ENCODE measurements at regions of chr1 and their contacts with region 1.

Region 1: DNA sequence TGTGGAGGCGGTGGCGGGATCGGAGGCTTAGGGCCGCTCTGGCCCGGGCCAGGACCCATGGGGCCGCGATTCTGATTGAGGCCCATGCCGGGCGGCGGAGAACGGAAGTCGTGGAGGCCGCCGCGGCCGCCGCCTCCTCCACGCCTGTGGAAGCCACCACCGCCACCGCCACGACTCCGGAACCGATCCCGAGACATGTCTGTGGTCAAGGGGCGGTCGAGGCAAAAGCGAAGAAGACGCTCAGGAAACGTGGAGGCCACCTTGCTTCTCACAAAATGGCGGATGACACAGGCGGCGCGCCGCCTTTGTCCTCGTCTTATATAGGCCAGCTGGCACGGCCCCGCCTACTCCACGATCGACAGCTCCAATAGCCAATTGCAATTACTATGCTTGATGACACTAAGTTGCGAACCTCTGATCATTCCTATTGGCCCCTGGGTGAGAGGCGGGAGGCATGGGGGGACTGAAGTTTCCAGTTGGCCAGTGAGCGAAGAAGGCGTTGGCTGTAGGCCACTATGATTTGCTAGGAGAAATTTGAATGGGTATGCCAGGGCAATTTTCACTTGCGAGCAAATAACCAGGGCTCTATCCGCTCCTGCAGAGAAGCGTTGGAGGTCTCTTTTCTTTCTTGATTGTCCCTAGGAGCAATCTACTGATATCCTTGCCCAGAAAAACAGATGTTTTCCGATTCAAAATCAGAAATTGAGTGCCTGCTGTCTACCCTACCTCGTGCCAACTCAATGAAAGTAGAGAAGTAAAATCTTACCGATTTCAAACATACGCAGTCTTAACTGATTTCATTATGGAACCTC is at the start of gene SFPQ:
- DNase-seq: peak; percentile 95
- ATAC-seq: peak; percentile 95 to 96
- total RNA-seq, gene SFPQ: 84.1 to 129 TPM

Region 2: DNA sequence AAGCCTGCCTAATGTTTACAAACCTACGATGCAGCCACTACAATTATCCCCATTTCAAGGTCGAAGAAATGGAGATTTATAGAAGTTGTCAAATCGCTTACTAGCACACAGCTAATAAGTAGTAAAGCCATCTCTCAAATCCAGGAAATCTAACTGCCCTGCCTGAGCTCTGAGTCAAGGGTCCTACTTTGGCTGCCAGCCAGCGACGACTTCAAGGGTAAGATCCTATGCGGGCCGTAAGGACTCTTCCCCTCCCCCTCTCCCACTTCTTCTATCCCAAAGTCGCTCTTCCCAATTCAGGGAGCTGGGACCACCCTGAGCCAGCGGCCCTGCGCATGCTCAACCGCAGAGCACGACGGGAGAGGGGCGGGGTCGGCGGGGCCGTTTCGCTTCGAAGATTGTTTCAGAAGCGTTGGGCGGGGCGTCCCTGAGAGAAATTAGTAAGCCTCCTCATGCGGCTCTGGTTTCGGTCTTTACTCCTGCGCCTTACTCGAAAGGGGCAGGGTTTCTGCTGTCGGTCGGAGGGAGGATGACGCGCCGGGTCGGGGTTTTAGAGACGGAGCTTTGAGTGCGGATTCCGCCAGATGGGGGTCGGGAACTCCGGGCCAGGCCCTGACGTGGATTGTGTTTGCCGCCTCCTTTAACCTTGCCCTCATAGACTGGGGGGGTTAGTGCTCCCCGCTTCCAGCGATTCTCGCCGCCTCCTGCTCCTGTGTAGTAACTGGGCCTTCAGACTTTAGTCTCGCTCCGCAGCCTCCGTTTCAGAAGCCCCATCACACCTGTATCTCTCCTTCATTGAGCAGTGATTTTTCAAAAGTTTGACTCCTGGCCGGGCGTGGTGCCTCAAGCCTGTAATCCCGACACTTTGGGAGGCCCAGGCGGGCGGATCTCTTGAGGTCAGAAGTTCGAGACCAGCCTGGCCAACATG is 113.8 kb before region 1 on chr1 and contains the start of gene ZMYM1:
- intact Hi-C with region 1: loop called in 1 of 2 experiments (anchors 5 kb)
- DNase-seq: peak; percentile 90
- ATAC-seq: peak; percentile 98 to 99
- total RNA-seq, gene ZMYM1: 6.9 to 7.5 TPM

Region 3: DNA sequence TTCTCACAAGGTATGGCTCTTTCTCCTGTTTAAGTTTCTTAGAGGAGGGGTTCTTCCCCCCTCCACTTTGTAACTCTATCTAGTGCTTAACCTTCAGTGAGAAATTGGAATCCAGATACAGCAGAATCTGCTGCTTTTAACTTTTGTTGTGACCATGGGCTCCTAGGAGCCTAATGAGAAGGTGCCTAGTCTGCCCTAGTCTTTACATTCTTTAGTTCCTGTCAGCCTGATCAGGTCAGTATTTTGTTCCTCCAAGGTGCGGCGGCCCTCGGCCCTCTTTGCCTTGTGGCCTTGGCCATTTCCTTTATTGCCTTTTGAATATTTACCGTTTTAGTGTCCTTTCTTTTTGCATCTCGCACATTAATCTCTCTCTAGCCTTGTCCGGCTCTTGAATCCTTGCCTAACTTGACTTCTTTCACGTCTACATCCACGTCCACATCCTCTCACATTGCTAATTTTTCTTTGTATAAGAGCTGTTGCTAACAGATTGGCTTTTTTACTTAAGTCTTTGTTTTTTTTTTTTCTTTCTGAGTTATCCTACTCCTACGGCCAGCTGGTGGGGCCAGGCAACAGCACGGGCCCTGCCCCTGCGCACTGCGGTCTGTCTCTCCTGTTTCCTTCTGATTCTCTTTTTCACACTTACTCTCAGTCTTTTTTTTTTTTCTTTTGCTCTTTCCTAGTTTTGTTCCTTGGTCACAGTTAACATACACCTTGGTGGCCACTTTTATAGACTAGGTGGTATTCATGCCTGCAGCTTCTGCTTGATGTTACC is 49.1 kb before region 1 on chr1:
- intact Hi-C with region 1: no loop called
- DNase-seq: no peak
- ATAC-seq: no peak